ENCODE measurements at regions of chr18 and their contacts with region 1.

Region 1: GRCh38 chr18:26978812-26979341 is 113.4 kb upstream of the AQP4 start:
- DNase-seq: no peak
- H3K4me3 ChIP-seq: no peak overlapping the region
- H3K4me1 ChIP-seq: peaks cover 10% of the 10 kb centered on the region
- H3K27me3 ChIP-seq: peaks cover 2% of the 10 kb centered on the region; the same call in 1 of the 2 replicates

Region 2: DNA sequence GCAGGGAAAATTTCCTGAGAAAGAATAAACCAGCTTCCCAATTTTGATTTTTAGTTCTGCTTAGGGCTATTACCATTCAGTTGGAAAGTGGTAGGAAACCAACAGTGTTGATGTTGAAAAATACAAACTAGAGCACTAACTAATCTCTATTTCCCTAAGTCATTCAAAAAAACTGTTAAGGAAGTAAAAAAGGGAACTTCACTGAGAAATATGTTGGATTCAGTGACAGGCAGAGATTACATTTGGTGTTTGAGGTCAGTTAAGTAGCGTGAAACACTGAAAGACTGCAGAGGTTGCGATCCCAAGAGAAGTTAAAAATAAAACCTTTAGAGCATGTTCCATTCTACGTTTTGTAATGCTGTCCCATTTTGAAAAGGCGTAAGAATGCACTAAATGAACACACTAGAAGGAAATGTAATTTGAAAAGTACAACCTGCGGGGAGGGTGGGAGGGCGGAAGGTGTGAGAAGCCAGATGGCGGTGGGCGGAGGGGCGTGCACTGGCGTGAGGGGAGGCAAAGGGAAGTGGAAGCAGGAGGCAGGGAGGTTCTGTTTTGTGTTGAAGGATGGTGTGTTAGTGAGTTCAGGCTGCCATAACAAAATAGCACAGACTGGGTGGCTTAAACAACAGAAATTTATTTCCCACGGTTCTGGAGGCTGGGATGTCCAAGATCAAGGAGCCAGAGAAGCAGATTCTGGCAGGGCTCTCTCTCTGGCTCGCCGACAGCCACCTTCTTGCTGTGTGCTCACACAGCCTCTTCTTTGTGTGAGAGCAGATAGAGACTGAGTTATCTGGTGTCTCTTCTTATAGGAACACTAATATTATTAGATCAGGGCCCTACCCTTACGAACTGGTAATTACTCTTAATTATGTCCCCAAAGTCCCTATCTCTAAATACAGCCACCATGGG is 336.2 kb before region 1 on chr18:
- in situ Hi-C with region 1: loop called (anchors 25 kb)
- DNase-seq: no peak
- H3K4me3 ChIP-seq: no peak overlapping the region
- H3K4me1 ChIP-seq: peaks cover 17% of the 10 kb centered on the region
- H3K27me3 ChIP-seq: 0 out of 2 replicates have a peak, but pooled peaks cover 2% of the 10 kb centered on the region

Measured in HAP-1 (cell line).